ENCODE measurements at regions of chr11 and their contacts with region 1.

Region 1: GRCh38 chr11:61733120-61733978 is 19.1 kb upstream of the MYRF start:
- DNase-seq: peak; percentile 93
- ATAC-seq: peak; percentile 86

Region 2: GRCh38 chr11:61679893-61680621 is 53.3 kb before region 1 on chr11 and contains the start of gene DAGLA:
- intact Hi-C with region 1: loop called (anchors 1 kb)
- DNase-seq: peak; percentile 90
- ATAC-seq: peak; percentile 85
- total RNA-seq, gene DAGLA: 4.3 TPM

Region 3: GRCh38 chr11:61695917-61696316 is 37.4 kb before region 1 on chr11:
- intact Hi-C with region 1: loop called (anchors 5 kb)
- DNase-seq: peak; percentile 80
- ATAC-seq: peak; percentile 73

Measured in Right ventricle myocardium inferior (tissue), 1 donor.